Transverse colon (tissue), 4 donors: ENCODE measurements at regions of chr2 and their contacts with region 1.

Region 1: GRCh38 chr2:32249731-32250236 is 14.9 kb downstream of the NLRC4 start:
- DNase-seq: no peak
- H3K4me3 ChIP-seq: no peak overlapping the region
- H3K27ac ChIP-seq: no peak overlapping the region
- H3K4me1 ChIP-seq: peaks cover 0 to 3% (median 0%) of the 10 kb centered on the region in 4 donors
- H3K27me3 ChIP-seq: no peaks in the 10 kb centered on the region
- CTCF ChIP-seq: no peak
- EP300 ChIP-seq: no peak
- POLR2A ChIP-seq: no peak

Region 2: GRCh38 chr2:32715981-32716380 is 466.2 kb after region 1 on chr2:
- in situ Hi-C with region 1: no loop called
- intact Hi-C with region 1: no loop called
- DNase-seq: no peak
- H3K4me3 ChIP-seq: no peak overlapping the region
- H3K27ac ChIP-seq: no peak overlapping the region
- H3K4me1 ChIP-seq: peaks cover 0 to 4% (median 2%) of the 10 kb centered on the region in 4 donors
- H3K27me3 ChIP-seq: no peaks in the 10 kb centered on the region
- CTCF ChIP-seq: no peak
- EP300 ChIP-seq: no peak
- POLR2A ChIP-seq: no peak

Region 3: DNA sequence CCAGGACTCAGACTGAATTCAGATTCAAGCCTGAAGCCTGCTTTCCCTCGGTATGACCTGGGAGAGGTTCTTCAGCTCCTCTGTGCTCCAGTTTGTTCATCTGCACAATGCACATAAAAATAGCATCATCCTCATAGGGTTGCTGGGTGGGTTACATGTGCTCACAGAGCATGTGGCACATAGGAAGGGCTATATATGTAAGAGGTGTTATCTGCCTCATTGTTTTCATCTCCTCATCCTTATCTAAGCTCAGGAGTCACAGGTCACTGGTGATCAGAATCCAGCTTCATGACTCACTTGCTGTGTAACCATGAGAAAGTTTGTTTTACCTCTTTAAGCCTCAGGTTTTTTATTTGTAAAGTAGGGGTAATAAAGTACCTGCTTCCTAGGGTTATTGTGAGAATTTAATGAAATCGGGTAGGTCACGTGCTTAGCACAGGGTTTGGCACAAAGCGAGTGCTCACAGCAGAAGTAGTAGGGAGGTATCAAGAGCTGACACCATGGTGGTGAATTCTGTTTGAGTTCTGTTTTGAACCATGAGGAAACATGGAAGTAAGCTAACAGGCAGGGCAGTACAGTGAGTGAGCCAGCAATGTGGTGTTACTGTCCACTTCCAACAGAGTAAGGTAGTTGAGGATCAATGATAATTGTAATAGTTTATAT is 555.5 kb after region 1 on chr2:
- in situ Hi-C with region 1: no loop called
- intact Hi-C with region 1: no loop called
- DNase-seq: no peak
- H3K4me3 ChIP-seq: no peak overlapping the region
- H3K27ac ChIP-seq: peak overlapping the region in 2 of 4 donors; percentile 12 to 20
- H3K4me1 ChIP-seq: peaks cover 0 to 11% (median 7%) of the 10 kb centered on the region in 4 donors
- H3K27me3 ChIP-seq: no peaks in the 10 kb centered on the region
- CTCF ChIP-seq: no peak
- EP300 ChIP-seq: no peak
- POLR2A ChIP-seq: no peak

Region 4: GRCh38 chr2:33958591-33958990 is 1708.8 kb after region 1 on chr2:
- in situ Hi-C with region 1: no loop called
- intact Hi-C with region 1: loop called (anchors 5 kb)
- DNase-seq: no peak
- H3K4me3 ChIP-seq: no peak overlapping the region
- H3K27ac ChIP-seq: no peak overlapping the region
- H3K4me1 ChIP-seq: no peaks in the 10 kb centered on the region
- H3K27me3 ChIP-seq: no peaks in the 10 kb centered on the region
- CTCF ChIP-seq: no peak
- EP300 ChIP-seq: no peak
- POLR2A ChIP-seq: no peak